Activated CD4-positive, alpha-beta T cell treated with anti-CD3 and anti-CD28 coated beads, Interleukin-2, amount 10 ng/mL, durations not matched to agents 24 days and 14 days (primary cell): ENCODE measurements at regions of chr1 and their contacts with region 1.

Region 1: GRCh38 chr1:239898062-239898730 is 193.5 kb upstream of the FMN2 start:
- DNase-seq: peak; percentile 91
- H3K4me3 Mint-ChIP-seq: no peak overlapping the region
- H3K27ac Mint-ChIP-seq: no peak overlapping the region
- H3K4me1 Mint-ChIP-seq: peaks cover 4% of the 10 kb centered on the region
- H3K27me3 Mint-ChIP-seq: peaks cover 3% of the 10 kb centered on the region

Region 2: DNA sequence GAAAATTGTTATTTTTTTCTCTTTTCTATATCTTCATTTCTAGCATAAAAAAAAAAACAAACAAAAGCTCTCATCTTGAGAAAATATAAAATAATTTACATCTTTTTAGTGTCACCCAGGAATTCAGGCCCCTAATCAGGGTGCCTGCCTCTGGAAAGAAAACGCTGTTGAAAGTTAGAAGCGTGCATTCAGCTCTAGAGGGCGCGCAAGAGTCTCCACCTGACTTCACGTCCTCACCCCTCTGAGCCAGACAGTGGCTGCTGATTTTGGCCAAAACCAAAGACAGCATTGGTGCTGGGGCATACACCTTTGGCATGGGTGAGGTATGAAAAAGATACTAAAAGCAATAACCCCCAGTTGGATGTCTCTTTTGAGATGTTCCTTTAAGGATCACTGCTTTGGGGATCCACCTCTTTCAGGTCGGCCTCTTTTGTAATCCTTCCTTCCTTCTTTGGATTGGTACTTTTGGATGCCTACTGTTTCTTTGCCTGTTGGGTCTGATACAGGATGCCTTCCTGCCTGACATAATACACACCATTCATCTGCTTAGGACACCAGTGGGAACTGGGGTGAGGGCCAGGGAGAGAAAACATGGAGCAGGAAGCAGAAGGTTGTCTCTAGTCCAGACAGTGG is 589.4 kb before region 1 on chr1:
- intact Hi-C with region 1: loop called (anchors 1 kb)
- DNase-seq: peak; percentile 71
- H3K4me3 Mint-ChIP-seq: no peak overlapping the region
- H3K27ac Mint-ChIP-seq: no peak overlapping the region
- H3K4me1 Mint-ChIP-seq: no peaks in the 10 kb centered on the region
- H3K27me3 Mint-ChIP-seq: no peaks in the 10 kb centered on the region

Region 3: DNA sequence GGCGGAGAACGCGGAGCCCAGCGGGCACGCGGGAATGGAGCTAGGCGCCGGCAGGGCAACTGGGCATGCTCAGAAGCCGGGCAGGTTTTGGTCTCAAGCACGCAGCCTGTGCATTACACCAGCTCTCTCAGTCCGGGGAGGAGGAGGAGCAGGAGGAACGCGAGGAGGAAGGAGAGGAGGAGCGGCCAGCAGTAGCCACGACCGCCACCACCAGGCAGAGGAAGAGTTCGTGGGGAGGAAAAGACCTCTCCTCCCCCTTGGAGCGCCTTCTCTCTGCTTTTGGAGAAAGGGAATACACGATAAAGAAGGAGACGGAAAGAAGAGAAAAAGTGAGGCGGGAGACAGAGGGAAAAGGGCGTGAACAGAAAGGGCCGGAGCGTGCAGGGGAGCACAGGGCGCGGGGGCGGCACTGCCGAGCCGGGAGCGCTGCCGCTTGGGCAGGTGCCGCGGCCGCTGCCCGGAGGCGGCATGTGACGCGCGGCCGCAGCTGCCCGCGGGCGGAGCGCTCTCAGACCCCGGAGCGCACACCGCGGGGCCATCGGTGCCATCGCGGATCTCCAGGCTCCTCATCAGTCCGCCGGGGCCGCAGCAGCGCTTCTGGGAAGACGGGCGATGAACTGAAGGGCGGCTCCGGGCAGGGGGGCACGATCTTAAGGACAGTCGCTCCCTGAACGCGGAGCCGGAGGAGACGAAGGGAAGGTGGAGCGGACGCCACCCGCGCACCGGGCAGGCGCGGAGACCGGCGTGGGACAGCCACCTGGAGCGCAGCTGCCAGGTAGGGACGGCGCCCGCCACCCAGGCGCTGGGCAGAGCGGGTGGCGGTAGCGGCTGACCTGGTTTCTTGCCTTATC is 511.5 kb before region 1 on chr1 and contains the start of gene CHRM3:
- intact Hi-C with region 1: no loop called
- DNase-seq: peak; percentile 57
- H3K4me3 Mint-ChIP-seq: peak within 1 kb of the TSS; percentile 88
- H3K27ac Mint-ChIP-seq: peak within 1 kb of the TSS; percentile 71
- H3K4me1 Mint-ChIP-seq: peaks cover 17% of the 10 kb centered on the region
- H3K27me3 Mint-ChIP-seq: peaks cover 57% of the 10 kb centered on the region
- total RNA-seq, gene CHRM3: not detected in 2 replicates

Region 4: GRCh38 chr1:239590556-239590955 is 307.6 kb before region 1 on chr1:
- intact Hi-C with region 1: loop called (anchors 5 kb)
- DNase-seq: no peak
- H3K4me3 Mint-ChIP-seq: no peak overlapping the region
- H3K27ac Mint-ChIP-seq: no peak overlapping the region
- H3K4me1 Mint-ChIP-seq: peaks cover 3% of the 10 kb centered on the region
- H3K27me3 Mint-ChIP-seq: no peaks in the 10 kb centered on the region

Region 5: DNA sequence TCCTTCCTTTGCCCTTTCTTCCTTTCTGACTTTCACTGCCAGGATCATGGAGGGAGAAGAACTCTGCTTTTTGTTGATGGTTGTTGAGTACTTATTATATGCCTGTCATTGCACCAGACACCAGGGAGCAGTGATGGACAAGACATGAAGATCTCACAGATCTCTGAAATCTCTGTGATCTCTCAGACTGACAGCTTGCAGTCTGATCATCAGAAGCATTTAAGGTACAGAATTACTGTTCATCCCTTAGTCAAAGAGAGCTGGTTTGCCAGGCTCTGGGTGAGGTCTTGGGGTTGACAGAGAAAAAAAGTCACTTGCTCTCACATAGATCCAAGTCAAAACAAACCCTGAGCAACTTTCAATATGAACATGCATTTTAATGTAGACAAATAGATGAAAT is 106.0 kb before region 1 on chr1:
- intact Hi-C with region 1: loop called (anchors 5 kb)
- DNase-seq: no peak
- H3K4me3 Mint-ChIP-seq: no peak overlapping the region
- H3K27ac Mint-ChIP-seq: no peak overlapping the region
- H3K4me1 Mint-ChIP-seq: no peaks in the 10 kb centered on the region
- H3K27me3 Mint-ChIP-seq: peaks cover 2% of the 10 kb centered on the region